GM10248 (cell line): ENCODE measurements at regions of chr15 and their contacts with region 1.

Region 1: DNA sequence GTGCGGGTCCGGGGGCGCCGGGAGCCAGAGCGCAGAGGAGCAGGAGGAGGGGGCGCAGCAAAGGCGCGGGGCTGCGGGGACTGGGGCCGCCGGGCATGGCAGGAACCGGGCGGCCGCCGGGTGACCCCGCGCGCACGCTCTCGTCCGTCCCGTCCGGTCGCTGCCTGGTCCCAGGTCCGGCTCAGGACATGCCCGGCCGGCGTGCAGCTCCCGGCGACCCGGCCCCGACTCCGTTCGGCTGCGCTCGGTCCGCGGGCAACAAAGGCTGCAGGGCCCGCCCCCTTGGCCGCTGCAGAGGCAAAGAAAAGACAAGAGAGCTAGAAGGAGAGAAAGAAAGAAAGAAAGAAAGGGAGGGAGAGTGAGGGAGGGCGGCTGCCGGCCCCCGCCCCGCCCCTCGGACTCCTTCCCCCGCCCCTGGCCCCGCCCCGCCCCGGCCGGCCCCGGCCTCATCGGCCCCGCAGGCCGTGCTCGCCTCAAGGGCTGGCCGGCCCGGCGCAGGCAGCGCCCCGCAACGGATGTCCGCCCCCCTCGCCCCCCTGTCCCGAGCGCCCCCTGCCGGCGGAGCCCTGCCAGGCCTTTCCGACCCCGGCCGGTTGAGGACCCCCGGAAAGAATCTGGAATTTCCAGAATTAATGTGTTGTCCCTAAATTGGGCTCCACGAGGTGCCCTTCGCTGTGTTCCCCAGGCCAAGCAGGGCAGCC is at the start of gene ADAMTS7:
- DNase-seq: peak; percentile 93
- CTCF ChIP-seq: peak; percentile 51

Region 2: GRCh38 chr15:78822514-78822913 is 11.2 kb after region 1 on chr15:
- CTCF ChIA-PET with region 1: interaction called, 11 read pairs
- POLR2A ChIA-PET with region 1: no interaction called
- DNase-seq: no peak
- CTCF ChIP-seq: no peak

Region 3: DNA sequence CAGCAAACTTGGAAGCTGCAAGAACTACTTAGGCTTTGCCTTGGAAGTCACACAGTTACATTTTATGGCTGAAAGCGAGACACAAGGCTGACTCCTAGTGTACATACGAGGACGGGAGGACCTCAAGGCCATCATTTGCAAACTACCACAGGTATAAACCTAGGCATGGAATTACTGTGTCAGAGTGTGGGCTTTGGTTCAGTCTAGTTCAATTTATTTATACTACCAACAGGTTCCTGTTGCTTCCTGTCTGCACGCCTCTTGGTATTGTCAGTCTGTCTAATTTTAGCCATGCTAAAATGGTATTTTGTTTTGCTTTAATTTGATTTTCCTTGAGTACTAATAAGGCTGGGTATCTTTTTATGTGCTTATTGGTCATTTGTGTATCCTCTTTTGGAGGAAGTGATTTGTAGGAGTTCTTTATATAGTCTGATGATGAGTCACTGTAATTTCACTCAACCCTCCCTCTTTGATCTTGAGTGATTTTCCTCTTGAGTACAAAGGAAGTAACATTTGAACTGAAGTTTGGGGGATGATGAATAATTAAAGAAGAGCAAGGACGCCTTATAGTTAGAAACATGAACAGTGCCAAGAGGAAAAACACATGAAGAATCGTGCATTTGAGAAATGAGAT is 479.5 kb after region 1 on chr15:
- CTCF ChIA-PET with region 1: no interaction called
- POLR2A ChIA-PET with region 1: no interaction called
- DNase-seq: no peak
- CTCF ChIP-seq: no peak